Dorsolateral prefrontal cortex (tissue), 120 donors: ENCODE measurements at regions of chr5 and their contacts with region 1.

Region 1: GRCh38 chr5:55936100-55936693 is 58.6 kb downstream of the IL6ST start:
- DNase-seq: peak; percentile 65 to 90 (median 80)
- H3K4me3 ChIP-seq: no peak overlapping the region
- H3K27ac ChIP-seq: peak overlapping the region in 1 of 59 donors; percentile 22
- H3K27me3 ChIP-seq: no peaks in the 10 kb centered on the region
- CTCF ChIP-seq: peak; percentile 77 to 99 (median 92)

Region 2: GRCh38 chr5:56200856-56201666 is 264.9 kb after region 1 on chr5:
- intact Hi-C with region 1: loop called (anchors 1 to 5 kb)
- DNase-seq: peak in 5 of 10 donors; percentile 20 to 56 (median 48)
- H3K4me3 ChIP-seq: no peak overlapping the region
- H3K27ac ChIP-seq: no peak overlapping the region
- H3K27me3 ChIP-seq: no peaks in the 10 kb centered on the region
- CTCF ChIP-seq: peak in 55 of 56 donors; percentile 37 to 83 (median 69)

Region 3: DNA sequence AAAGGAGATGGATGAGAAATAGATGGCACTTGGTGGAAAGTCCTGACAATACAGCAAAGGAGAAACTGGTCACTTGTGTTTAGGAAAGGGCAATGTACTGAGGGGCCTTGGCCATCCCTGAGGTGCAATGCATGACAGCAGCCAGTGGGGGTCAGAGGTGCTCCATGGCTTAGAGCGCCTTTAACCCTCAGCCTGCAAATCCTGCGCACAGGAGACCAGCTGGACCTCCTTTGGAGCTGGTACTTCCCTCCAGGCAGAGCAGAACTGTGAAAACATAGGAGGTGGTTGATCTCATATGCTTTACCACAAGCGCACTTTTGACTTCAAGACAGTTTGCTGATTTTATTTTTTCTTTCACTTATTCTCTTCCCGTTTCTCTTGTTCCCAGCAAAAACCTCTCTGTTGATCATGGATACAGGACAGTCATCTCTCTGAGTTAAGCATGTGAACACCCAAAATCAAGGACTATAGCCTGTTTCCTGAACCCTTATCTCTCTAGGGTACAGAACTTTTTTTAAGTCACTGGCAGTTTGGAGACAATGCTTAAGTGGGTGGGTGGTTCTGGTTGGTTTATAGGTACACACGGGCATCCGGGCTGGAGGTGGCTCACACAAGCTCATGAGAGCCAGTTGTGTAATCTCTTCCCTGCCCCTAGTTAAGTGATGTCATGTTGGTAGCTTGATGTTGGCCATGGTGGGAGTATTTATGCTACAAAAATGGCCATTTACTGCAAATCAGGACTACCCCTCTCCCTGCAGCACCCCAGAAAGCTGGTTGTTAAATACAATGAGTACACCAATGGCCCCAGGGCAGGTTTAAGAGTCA is 334.6 kb after region 1 on chr5:
- intact Hi-C with region 1: loop called in 1 of 2 experiments (anchors 10 kb)
- DNase-seq: peak; percentile 66 to 85 (median 80)
- H3K4me3 ChIP-seq: no peak overlapping the region
- H3K27ac ChIP-seq: no peak overlapping the region
- H3K27me3 ChIP-seq: no peaks in the 10 kb centered on the region
- CTCF ChIP-seq: peak; percentile 74 to 99 (median 96)